ENCODE measurements at regions of chr13 and their contacts with region 1.

Region 1: GRCh38 chr13:20049558-20050473 is 91.3 kb downstream of the ZMYM2 start:
- DNase-seq: no peak
- H3K4me3 Mint-ChIP-seq: no peak overlapping the region
- H3K27ac Mint-ChIP-seq: no peak overlapping the region
- H3K4me1 Mint-ChIP-seq: peaks cover 19% of the 10 kb centered on the region
- H3K27me3 Mint-ChIP-seq: no peaks in the 10 kb centered on the region

Region 2: DNA sequence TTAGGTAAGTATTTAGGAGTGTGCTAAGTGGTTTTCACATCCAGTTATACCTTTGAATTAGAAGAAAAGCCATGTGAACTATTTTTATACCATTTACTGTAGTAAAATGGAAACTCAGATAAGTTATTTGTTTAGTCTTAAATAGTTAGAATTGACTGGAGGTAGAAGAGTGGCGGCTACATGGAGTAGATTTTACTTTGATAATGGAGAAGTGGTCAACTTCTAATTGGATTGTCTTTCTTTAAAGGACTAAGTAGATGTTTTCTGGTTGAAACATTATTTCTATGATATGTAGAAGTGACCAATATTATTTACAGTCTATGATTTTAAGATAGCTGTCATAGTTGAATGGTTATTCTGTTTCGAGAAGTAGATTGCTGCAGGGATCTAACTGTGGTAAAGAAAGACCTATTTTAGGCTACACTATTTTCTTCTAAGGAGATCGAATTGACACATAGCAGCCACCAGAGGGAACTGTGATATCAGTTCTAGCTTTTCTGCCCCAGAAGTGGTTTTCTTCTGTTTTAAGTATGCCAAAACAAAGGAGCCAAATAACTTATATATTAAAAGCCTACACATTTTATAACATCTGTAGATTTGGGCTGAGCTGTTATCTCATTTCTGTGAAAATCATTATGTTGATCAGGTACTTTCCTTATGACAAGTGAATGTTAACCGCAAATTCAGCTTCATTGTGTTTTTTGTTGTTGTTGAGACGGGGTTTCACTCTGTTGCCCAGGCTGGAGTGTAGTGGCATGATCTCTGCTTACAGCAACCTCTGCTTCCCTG is 65.2 kb before region 1 on chr13:
- CTCF ChIA-PET with region 1: interaction called, 3 read pairs
- POLR2A ChIA-PET with region 1: no interaction called
- intact Hi-C with region 1: loop called (anchors 2 kb)
- DNase-seq: peak; percentile 32
- H3K4me3 Mint-ChIP-seq: no peak overlapping the region
- H3K27ac Mint-ChIP-seq: peak overlapping the region; percentile 73
- H3K4me1 Mint-ChIP-seq: peaks cover 43% of the 10 kb centered on the region
- H3K27me3 Mint-ChIP-seq: no peaks in the 10 kb centered on the region

Region 3: GRCh38 chr13:20019043-20019442 is 30.8 kb before region 1 on chr13:
- CTCF ChIA-PET with region 1: no interaction called
- POLR2A ChIA-PET with region 1: no interaction called
- intact Hi-C with region 1: loop called (anchors 5 kb)
- DNase-seq: no peak
- H3K4me3 Mint-ChIP-seq: no peak overlapping the region
- H3K27ac Mint-ChIP-seq: no peak overlapping the region
- H3K4me1 Mint-ChIP-seq: peaks cover 35% of the 10 kb centered on the region
- H3K27me3 Mint-ChIP-seq: no peaks in the 10 kb centered on the region

Measured in activated CD4-positive, alpha-beta memory T cell treated with anti-CD3 and anti-CD28 coated beads for 36 hours (primary cell).